ENCODE measurements at regions of chrX and their contacts with region 1.

Region 1: DNA sequence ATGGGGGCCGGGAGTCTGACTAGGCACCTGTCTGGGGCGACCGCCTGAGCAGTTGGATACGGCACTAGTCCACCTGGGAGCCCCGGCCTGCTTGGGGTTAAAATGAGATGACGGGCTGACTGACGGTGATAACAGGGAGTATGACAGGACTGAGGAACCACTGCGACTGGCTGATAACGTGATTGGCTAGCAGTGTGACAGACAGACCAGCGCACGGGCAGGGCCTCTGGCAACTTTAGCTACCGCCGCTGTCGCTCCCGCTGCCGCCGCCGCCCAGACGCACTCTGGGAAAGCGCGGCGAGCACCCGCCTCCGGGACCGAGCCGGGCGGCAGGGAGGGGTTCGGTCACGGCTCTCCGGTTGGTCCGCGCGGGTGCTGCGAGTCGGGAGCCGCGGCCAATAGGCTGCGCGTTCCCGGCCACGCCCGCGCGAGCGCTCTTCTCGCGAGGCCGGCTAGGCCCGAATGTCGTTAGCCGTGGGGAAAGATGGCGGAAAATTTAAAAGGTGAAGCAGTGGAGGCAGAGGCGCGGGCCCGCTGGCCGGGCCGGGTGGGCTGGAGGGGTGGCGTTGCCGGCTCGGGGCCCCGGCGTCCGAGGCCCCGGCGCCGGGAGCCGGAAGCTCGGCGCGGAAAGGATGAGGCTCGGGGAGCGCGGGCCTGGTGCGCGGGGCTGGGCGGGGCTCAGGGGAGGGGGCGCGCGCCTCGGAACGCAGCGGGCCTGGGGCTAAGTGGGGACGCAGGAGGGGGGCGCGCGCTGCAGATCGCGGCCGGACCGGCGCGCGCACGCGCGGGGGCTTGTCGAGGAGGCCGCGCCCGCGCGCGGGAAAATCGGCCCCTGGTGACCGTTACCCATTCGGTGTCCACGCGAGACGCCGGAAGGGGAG is at the start of gene SUV39H1:
- DNase-seq: peak; percentile 89
- H3K4me3 Mint-ChIP-seq: peak within 1 kb of the TSS; percentile 90
- H3K27ac Mint-ChIP-seq: peak within 1 kb of the TSS; percentile 97
- H3K4me1 Mint-ChIP-seq: peaks cover 49% of the 10 kb centered on the region
- H3K27me3 Mint-ChIP-seq: no peaks in the 10 kb centered on the region
- total RNA-seq, gene SUV39H1: 30.3 to 33.2 TPM

Region 2: DNA sequence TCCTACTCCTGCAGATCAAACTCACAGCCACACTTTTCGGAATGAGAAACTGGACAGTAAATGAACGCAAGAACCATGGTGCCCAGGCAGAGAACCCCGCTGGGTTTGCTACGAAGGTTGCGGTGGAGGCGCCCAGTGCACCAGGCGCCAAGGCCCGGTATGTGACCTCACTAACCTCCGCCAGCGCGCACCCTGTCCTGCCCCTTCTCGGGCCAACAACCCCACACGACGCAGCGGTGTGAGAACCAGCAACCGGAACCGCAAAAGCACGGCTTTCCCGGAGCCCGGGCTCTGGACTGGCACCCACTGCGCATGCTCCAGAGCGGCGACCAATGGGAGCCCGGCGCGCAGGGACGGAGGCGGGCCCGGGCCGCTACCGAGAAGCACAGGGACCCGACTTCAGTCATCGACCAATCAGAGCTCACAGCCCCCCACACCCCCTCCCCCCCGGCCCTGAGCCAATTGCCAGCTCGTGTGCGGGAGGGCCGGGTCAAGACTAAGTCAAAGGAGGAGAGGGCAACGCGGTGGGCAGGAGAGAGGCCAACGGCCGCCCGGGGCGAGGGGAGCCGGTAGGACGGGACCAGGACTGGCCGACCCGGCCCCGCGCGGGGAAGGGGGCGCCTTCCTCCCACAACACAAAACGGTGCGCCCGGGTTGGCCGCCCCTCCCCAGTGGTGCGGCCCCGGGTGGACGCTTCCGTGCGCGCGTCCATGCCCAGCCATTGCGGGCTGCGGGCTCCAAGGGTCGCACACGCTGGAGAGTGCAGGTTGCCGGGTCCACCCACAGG is 20.2 kb before region 1 on chrX:
- CTCF ChIA-PET with region 1: no interaction called
- POLR2A ChIA-PET with region 1: interaction called, 32 read pairs
- DNase-seq: peak; percentile 90
- H3K4me3 Mint-ChIP-seq: peak overlapping the region; percentile 90
- H3K27ac Mint-ChIP-seq: peak overlapping the region; percentile 84
- H3K4me1 Mint-ChIP-seq: peaks cover 31% of the 10 kb centered on the region
- H3K27me3 Mint-ChIP-seq: no peaks in the 10 kb centered on the region

Region 3: GRCh38 chrX:48683411-48683982 is 13.0 kb before region 1 on chrX and contains the start of gene WAS:
- CTCF ChIA-PET with region 1: no interaction called
- POLR2A ChIA-PET with region 1: interaction called, 62 read pairs
- DNase-seq: peak; percentile 64
- H3K4me3 Mint-ChIP-seq: peak within 1 kb of the TSS; percentile 90
- H3K27ac Mint-ChIP-seq: peak within 1 kb of the TSS; percentile 85
- H3K4me1 Mint-ChIP-seq: peaks cover 69% of the 10 kb centered on the region
- H3K27me3 Mint-ChIP-seq: no peaks in the 10 kb centered on the region
- total RNA-seq, gene WAS: 156 to 157 TPM

Region 4: DNA sequence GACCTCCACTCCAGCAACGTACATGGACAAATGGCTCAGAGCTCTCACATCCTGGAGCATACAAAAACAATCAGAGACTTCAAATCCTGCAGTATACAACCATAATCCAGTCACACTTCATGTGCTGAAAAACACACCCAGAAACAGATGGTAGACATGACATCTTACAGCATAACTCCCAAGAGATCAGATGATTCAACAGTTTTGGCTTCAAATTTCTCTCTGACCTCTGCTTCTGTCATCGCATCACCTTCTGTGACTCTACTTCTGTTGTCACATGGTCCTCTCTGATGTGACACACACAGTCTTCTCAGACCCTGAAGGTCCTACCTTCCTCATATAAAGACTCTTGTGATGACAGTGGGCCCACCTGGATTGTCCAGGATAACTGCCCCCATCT is 18.5 kb after region 1 on chrX:
- CTCF ChIA-PET with region 1: interaction called, 3 read pairs
- POLR2A ChIA-PET with region 1: interaction called, 23 read pairs
- DNase-seq: no peak
- H3K4me3 Mint-ChIP-seq: peak overlapping the region; percentile 74
- H3K27ac Mint-ChIP-seq: peak overlapping the region; percentile 98
- H3K4me1 Mint-ChIP-seq: peaks cover 74% of the 10 kb centered on the region
- H3K27me3 Mint-ChIP-seq: no peaks in the 10 kb centered on the region